Activated CD8-positive, alpha-beta T cell treated with anti-CD3 and anti-CD28 coated beads, Interleukin-2, amount 10 ng/mL, durations not matched to agents 7 days and 5 days (primary cell): ENCODE measurements at regions of chr1 and their contacts with region 1.

Region 1: DNA sequence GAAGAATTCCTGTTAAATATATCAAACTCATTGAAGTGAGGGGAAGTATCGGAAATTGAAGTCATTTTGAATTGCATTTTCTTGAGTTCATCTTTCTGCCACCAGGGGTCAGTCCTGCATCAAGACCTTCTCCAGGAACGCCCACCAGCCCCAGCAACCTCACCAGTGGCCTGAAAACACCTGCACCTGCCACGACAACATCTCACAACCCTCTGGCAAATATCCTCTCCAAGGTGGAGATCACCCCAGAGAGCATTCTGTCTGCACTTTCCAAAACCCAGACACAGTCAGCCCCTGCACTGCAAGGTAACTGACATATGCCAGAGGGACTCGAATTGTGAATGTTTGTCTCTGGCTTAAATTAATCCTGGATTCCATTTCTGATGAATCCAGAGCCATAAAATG is 22.8 kb upstream of the TARS2 start:
- DNase-seq: peak; percentile 81
- ATAC-seq: peak; percentile 81
- H3K4me3 Mint-ChIP-seq: no peak overlapping the region
- H3K27ac Mint-ChIP-seq: no peak overlapping the region
- H3K4me1 Mint-ChIP-seq: peaks cover 4% of the 10 kb centered on the region
- H3K27me3 Mint-ChIP-seq: no peaks in the 10 kb centered on the region

Region 2: DNA sequence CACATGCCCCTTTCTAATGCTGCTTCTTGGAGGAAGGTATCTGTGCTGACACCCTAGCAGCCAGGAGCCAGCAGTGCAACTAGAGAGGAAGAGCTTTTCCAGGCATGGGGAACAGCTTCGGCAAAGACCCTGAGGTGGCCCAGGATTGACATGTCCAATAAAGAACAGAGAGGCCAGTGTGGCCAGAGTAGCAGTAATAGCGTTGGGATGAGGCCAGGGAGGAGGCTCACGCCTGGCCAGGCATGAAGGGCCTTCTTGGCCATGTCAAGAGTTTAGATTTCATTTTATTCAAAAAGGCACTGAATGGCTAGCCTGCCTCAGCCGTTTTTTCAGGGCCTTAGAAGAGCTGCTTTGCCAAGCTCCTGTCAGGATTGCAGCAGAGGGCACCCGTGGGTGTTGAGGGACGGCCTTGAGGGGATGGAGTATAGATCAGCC is 68.5 kb after region 1 on chr1:
- CTCF ChIA-PET with region 1: interaction called, 12 read pairs
- POLR2A ChIA-PET with region 1: no interaction called
- DNase-seq: no peak
- ATAC-seq: no peak
- H3K4me3 Mint-ChIP-seq: no peak overlapping the region
- H3K27ac Mint-ChIP-seq: peak overlapping the region; percentile 19
- H3K4me1 Mint-ChIP-seq: peaks cover 5% of the 10 kb centered on the region
- H3K27me3 Mint-ChIP-seq: no peaks in the 10 kb centered on the region